Natural killer cell (primary cell): ENCODE measurements at regions of chr9 and their contacts with region 1.

Region 1: GRCh38 chr9:97921959-97922724 is at the start of gene TRMO:
- DNase-seq: peak; percentile 98 to 100
- ATAC-seq: peak; percentile 75 to 93 (median 81)
- H3K4me3 ChIP-seq: peak within 1 kb of the TSS; percentile 78
- H3K4me3 Mint-ChIP-seq: peak within 1 kb of the TSS; percentile 92
- H3K27ac ChIP-seq: peak within 1 kb of the TSS; percentile 99
- H3K27ac Mint-ChIP-seq: peak within 1 kb of the TSS; percentile 98
- H3K4me1 ChIP-seq: peaks cover 13% of the 10 kb centered on the region
- H3K4me1 Mint-ChIP-seq: peaks cover 45 to 46% of the 10 kb centered on the region in 2 donors
- H3K27me3 ChIP-seq: no peaks in the 10 kb centered on the region
- H3K27me3 Mint-ChIP-seq: no peaks in the 10 kb centered on the region
- CTCF ChIP-seq: peak; percentile 56
- total RNA-seq, gene TRMO: 26.6 to 35.1 (median 31.2) TPM

Region 2: DNA sequence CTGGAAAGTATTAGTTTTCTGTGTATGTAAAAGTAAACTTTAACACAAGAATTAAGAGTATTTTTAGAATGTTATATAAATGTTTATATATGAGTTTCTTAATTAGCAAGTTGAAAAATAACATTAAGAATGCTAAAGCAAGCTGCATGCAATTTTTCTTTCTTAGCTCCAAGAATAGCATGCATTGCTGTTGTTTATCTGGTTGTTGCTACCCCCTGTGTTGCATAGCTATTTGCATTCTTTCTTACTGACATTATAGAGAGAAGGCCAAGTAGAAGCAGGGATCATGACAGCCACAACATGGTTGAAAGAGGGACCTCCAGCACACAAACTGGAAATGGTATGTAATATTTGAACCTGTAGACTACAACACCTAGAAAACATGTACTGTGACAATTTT is 1951.8 kb before region 1 on chr9:
- intact Hi-C with region 1: no loop called
- DNase-seq: no peak
- ATAC-seq: no peak
- H3K4me3 ChIP-seq: no peak overlapping the region
- H3K4me3 Mint-ChIP-seq: no peak overlapping the region
- H3K27ac ChIP-seq: no peak overlapping the region
- H3K27ac Mint-ChIP-seq: no peak overlapping the region
- H3K4me1 ChIP-seq: no peaks in the 10 kb centered on the region
- H3K4me1 Mint-ChIP-seq: peaks cover 0 to 5% of the 10 kb centered on the region in 2 donors
- H3K27me3 ChIP-seq: no peaks in the 10 kb centered on the region
- H3K27me3 Mint-ChIP-seq: no peaks in the 10 kb centered on the region
- CTCF ChIP-seq: no peak

Region 3: GRCh38 chr9:97938081-97938644 is 16.0 kb after region 1 on chr9 and contains the start of gene HEMGN:
- intact Hi-C with region 1: loop called (anchors 1 kb)
- DNase-seq: peak in 1 of 2 donors; percentile 79
- ATAC-seq: peak; percentile 90 to 95 (median 93)
- H3K4me3 ChIP-seq: no peak within 1 kb of the TSS
- H3K4me3 Mint-ChIP-seq: peak within 1 kb of the TSS; percentile 69
- H3K27ac ChIP-seq: peak within 1 kb of the TSS; percentile 62
- H3K27ac Mint-ChIP-seq: peak within 1 kb of the TSS; percentile 82 to 92
- H3K4me1 ChIP-seq: peaks cover 4% of the 10 kb centered on the region
- H3K4me1 Mint-ChIP-seq: peaks cover 14 to 15% of the 10 kb centered on the region in 2 donors
- H3K27me3 ChIP-seq: no peaks in the 10 kb centered on the region
- H3K27me3 Mint-ChIP-seq: no peaks in the 10 kb centered on the region
- CTCF ChIP-seq: no peak
- total RNA-seq, gene HEMGN: 0.47 to 0.75 (median 0.75) TPM

Region 4: GRCh38 chr9:97982683-97983588 is 60.8 kb after region 1 on chr9 and contains the start of gene ANP32B:
- intact Hi-C with region 1: loop called (anchors 1 kb)
- DNase-seq: peak; percentile 91 to 96
- ATAC-seq: peak; percentile 81 to 94 (median 81)
- H3K4me3 ChIP-seq: peak within 1 kb of the TSS; percentile 95
- H3K4me3 Mint-ChIP-seq: peak within 1 kb of the TSS; percentile 84
- H3K27ac ChIP-seq: peak within 1 kb of the TSS; percentile 95
- H3K27ac Mint-ChIP-seq: peak within 1 kb of the TSS; percentile 53 to 88
- H3K4me1 ChIP-seq: peaks cover 20% of the 10 kb centered on the region
- H3K4me1 Mint-ChIP-seq: peaks cover 11 to 32% of the 10 kb centered on the region in 2 donors
- H3K27me3 ChIP-seq: no peaks in the 10 kb centered on the region
- H3K27me3 Mint-ChIP-seq: no peaks in the 10 kb centered on the region
- CTCF ChIP-seq: peak; percentile 88
- total RNA-seq, gene ANP32B: 89.9 to 107 (median 100) TPM

Region 5: DNA sequence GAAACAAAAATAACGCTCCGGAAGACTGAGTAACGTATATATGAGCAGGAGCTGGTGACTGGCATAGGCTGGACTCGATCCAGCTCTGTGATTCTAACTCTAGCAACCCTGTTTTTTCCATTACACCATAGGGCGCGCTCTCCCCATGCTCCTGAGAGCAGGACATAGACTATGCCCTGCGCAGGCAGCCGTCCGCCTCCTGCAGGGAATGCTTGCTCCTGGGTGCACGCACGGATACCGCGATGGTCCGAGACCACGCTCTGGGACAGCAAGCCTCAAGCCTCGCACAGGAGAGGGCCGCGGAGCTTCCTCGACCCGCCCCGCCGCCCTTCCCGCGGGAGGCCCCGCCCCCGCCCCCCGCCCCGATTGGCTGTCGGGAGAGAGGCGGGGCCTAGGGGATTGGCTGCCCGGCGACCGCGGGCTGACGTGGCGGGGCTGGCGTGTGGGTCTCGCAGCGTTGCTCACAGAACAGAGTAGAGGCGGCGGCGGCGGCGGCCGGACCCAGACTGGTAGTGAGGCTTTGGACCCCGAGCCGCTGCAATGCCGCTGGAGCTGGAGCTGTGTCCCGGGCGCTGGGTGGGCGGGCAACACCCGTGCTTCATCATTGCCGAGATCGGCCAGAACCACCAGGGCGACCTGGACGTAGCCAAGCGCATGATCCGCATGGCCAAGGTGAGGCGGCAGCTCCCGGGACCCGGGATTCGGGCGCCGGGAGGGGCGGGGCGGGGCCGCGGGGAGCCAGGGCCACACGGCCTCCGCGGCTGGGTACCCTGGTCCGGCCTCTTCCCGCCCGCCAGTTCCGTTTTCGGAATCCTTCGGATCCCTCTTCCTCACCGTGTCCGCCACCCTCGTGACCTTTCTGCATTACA is 134.4 kb after region 1 on chr9 and contains the start of gene NANS:
- intact Hi-C with region 1: loop called (anchors 2 kb)
- DNase-seq: peak; percentile 90 to 93
- ATAC-seq: peak; percentile 97 to 99 (median 98)
- H3K4me3 ChIP-seq: peak within 1 kb of the TSS; percentile 60
- H3K4me3 Mint-ChIP-seq: peak within 1 kb of the TSS; percentile 98
- H3K27ac ChIP-seq: peak within 1 kb of the TSS; percentile 79
- H3K27ac Mint-ChIP-seq: peak within 1 kb of the TSS; percentile 93 to 95
- H3K4me1 ChIP-seq: peaks cover 15% of the 10 kb centered on the region
- H3K4me1 Mint-ChIP-seq: peaks cover 14 to 18% of the 10 kb centered on the region in 2 donors
- H3K27me3 ChIP-seq: no peaks in the 10 kb centered on the region
- H3K27me3 Mint-ChIP-seq: no peaks in the 10 kb centered on the region
- CTCF ChIP-seq: no peak
- total RNA-seq, gene NANS: 30.7 to 36.8 (median 34.1) TPM

Region 6: GRCh38 chr9:98255578-98256296 is 333.6 kb after region 1 on chr9 and contains the start of gene TBC1D2:
- intact Hi-C with region 1: loop called (anchors 2 kb)
- DNase-seq: peak; percentile 97 to 98
- ATAC-seq: peak; percentile 91 to 97 (median 91)
- H3K4me3 ChIP-seq: peak within 1 kb of the TSS; percentile 97
- H3K4me3 Mint-ChIP-seq: peak within 1 kb of the TSS; percentile 98
- H3K27ac ChIP-seq: peak within 1 kb of the TSS; percentile 95
- H3K27ac Mint-ChIP-seq: peak within 1 kb of the TSS; percentile 95 to 98
- H3K4me1 ChIP-seq: peaks cover 20% of the 10 kb centered on the region
- H3K4me1 Mint-ChIP-seq: peaks cover 33 to 40% of the 10 kb centered on the region in 2 donors
- H3K27me3 ChIP-seq: no peaks in the 10 kb centered on the region
- H3K27me3 Mint-ChIP-seq: no peaks in the 10 kb centered on the region
- CTCF ChIP-seq: no peak
- total RNA-seq, gene TBC1D2: 5.0 to 8.9 (median 7.0) TPM